Activated T-helper 1 cell treated with anti-CD3 and anti-CD28 coated beads, Interleukin-12 subunit alpha, Interleukin-12 subunit beta, Interleukin-2, Interleukin-4 antibody, amounts not matched to agents 30 ng/mL and 10 ng/mL and 1 ng/mL, durations not matched to agents 14 hours and 24 hours and 36 hours (primary cell): ENCODE measurements at regions of chr2 and their contacts with region 1.

Region 1: GRCh38 chr2:39379643-39380524 is 57.2 kb downstream of the MAP4K3 start:
- DNase-seq: no peak
- H3K4me3 Mint-ChIP-seq: no peak overlapping the region
- H3K27ac Mint-ChIP-seq: peak overlapping the region; percentile 67
- H3K4me1 Mint-ChIP-seq: peaks cover 39% of the 10 kb centered on the region
- H3K27me3 Mint-ChIP-seq: no peaks in the 10 kb centered on the region

Region 2: GRCh38 chr2:39313575-39313974 is 66.3 kb before region 1 on chr2:
- intact Hi-C with region 1: no loop called
- DNase-seq: no peak
- H3K4me3 Mint-ChIP-seq: no peak overlapping the region
- H3K27ac Mint-ChIP-seq: no peak overlapping the region
- H3K4me1 Mint-ChIP-seq: no peaks in the 10 kb centered on the region
- H3K27me3 Mint-ChIP-seq: no peaks in the 10 kb centered on the region

Region 3: GRCh38 chr2:39408316-39409136 is 28.6 kb after region 1 on chr2:
- intact Hi-C with region 1: loop called (anchors 1 kb)
- DNase-seq: no peak
- H3K4me3 Mint-ChIP-seq: no peak overlapping the region
- H3K27ac Mint-ChIP-seq: peak overlapping the region; percentile 54
- H3K4me1 Mint-ChIP-seq: peaks cover 39% of the 10 kb centered on the region
- H3K27me3 Mint-ChIP-seq: no peaks in the 10 kb centered on the region

Region 4: DNA sequence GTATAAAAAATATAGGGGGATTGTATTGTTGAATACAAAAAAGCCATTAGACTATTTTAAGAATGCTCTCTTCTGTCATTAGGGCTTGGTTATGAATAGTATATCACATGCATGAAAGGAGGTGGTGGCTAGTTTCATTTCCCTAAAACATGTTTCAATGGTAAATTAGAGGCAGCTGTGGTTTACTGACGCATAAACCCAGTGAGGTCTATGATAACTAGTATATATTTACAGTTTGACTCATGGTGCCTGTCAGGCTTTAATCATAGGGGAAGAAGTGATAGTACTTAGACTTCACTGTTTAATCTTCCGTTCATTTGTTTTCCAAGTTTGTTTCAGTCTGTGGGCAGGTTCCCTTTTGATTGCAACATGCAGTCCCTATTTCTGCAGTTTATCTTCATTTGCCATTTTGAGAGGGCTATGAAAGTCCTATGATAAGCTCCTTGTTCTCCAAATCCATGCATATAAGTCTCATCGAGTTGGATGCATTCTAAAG is 112.3 kb after region 1 on chr2:
- intact Hi-C with region 1: loop called (anchors 1 kb)
- DNase-seq: peak; percentile 23
- H3K4me3 Mint-ChIP-seq: peak overlapping the region; percentile 55
- H3K27ac Mint-ChIP-seq: peak overlapping the region; percentile 76
- H3K4me1 Mint-ChIP-seq: peaks cover 52% of the 10 kb centered on the region
- H3K27me3 Mint-ChIP-seq: peaks cover 13% of the 10 kb centered on the region

Region 5: GRCh38 chr2:39603436-39603835 is 223.6 kb after region 1 on chr2:
- intact Hi-C with region 1: loop called (anchors 5 kb)
- DNase-seq: no peak
- H3K4me3 Mint-ChIP-seq: no peak overlapping the region
- H3K27ac Mint-ChIP-seq: no peak overlapping the region
- H3K4me1 Mint-ChIP-seq: no peaks in the 10 kb centered on the region
- H3K27me3 Mint-ChIP-seq: peaks cover 2% of the 10 kb centered on the region

Region 6: DNA sequence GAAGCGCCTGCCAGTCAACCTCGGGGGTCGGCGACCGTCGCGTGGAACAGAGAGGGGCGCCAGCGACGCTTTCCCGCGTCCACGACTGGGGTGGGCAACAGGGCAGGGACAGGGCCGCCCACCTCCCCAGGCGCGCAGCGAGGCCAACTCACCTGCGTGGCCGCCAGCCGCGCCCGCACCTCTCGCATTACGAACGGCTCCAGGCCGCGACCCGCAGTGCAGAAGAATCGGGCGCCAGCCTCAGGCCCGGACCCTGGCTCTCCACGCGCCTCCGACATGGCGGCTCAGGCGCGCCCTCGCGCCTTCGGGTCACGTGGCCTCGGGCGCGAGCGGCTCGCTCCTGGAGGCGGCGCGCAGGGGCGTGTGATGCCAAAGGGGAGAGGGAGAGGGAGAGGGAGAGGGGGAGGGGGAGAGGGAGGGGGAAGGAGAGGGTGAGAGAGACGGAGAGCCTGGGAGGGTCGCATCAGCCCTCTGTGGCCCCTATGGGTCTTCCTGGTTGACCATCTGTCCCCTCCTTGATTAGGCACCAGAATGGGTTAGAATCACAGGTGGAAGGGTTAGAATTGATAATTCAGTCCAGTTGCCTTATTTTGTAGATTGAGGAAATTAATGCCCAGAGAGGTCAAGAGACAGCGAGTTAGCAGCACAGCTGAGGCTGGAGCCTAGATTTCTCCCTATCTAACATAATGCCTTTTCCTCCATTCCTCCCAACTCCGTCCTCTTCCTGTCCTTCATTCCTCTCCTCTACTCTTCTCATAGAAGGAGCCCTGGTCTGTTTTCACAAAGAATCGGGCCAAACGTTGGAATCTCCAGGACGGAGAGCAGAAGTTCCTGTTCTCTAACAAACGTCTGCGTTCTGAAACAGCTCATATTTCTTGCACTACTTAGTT is 399.3 kb after region 1 on chr2 and contains the start of gene THUMPD2:
- intact Hi-C with region 1: loop called (anchors 2 kb)
- DNase-seq: peak; percentile 67
- H3K4me3 Mint-ChIP-seq: peak within 1 kb of the TSS; percentile 94
- H3K27ac Mint-ChIP-seq: peak within 1 kb of the TSS; percentile 95
- H3K4me1 Mint-ChIP-seq: peaks cover 49% of the 10 kb centered on the region
- H3K27me3 Mint-ChIP-seq: peaks cover 5% of the 10 kb centered on the region
- total RNA-seq, gene THUMPD2: 21.2 and 21.6 TPM in 2 replicates